Lower leg skin (tissue), 4 donors: ENCODE measurements at regions of chr9 and their contacts with region 1.

Region 1: DNA sequence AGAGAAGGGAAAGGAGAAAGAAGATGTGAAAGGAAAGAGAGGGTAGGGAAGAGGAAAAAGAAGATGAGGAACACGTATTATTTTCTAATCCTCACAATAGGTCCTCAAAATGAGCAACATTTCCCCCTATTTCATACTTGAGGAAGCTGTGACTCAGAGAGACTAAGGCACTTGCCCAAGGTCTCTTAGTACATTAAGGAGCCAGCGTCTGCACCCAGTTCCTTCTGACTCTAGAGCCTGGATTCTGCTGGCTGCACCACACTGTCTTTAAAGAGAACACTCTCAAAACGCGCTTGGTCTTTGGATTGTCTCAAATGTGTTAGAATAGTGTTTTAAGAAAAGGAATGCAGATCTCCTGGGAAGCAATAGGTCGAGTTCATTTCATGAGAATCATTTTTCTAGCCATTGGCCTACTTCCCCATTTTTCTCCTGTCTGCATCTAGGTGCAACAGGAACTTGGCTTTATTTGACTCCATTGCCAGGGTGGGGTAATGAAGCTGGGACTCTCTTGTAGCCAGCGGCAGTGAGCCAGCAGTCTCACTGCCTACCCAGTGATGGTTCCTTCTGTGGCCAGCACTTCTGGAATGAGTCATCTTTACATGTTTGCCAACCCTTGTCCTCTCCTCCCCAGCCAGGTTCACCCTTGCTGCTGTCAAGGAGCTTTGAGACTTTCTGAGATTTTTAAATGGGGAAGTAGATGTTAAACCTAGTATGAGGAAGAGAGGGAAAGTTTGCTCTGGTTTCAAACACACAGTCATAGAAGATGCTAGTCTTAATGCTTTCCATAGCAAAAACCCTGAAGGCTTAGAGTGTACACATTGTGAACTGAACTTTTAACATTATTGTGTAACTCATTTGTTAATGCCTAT is 82.7 kb downstream of the DOCK8 start:
- DNase-seq: peak in 1 of 2 donors; percentile 35
- H3K4me3 ChIP-seq: no peak overlapping the region
- CTCF ChIP-seq: no peak
- POLR2A ChIP-seq: no peak

Region 2: DNA sequence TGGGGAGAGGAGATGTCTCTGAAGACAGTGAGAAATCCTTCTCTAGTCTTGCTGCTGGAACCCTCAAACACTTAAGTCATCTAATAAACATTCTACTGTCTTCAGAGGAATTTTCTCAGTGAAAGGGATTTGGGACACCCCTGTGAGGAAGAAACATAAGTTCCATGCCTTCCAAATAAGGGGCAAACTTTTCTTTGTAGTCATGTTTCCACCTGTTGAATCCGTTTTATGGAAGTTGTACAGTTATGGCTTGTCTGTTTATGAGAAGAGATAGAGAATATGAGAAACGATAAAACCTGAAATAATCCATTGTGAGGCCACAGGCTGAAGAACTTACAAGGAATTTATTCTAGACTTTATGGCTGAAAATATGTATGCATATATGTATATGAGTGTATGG is 33.1 kb before region 1 on chr9:
- intact Hi-C with region 1: loop called (anchors 1 kb)
- DNase-seq: no peak
- H3K4me3 ChIP-seq: no peak overlapping the region
- CTCF ChIP-seq: no peak
- POLR2A ChIP-seq: no peak

Region 3: GRCh38 chr9:922171-922570 is 624.8 kb after region 1 on chr9:
- intact Hi-C with region 1: no loop called
- DNase-seq: no peak
- H3K4me3 ChIP-seq: no peak overlapping the region
- CTCF ChIP-seq: no peak
- POLR2A ChIP-seq: no peak